GM12878 (cell line): ENCODE measurements at regions of chr1 and their contacts with region 1.

Region 1: GRCh38 chr1:92994105-92994712 is 32.9 kb upstream of the DIPK1A start:
- DNase-seq: no peak
- ATAC-seq: peak; percentile 98
- H3K4me3 ChIP-seq: no peak overlapping the region
- H3K27ac ChIP-seq: no peak overlapping the region
- H3K4me1 ChIP-seq: no peaks in the 10 kb centered on the region
- H3K27me3 ChIP-seq: no peaks in the 10 kb centered on the region
- CTCF ChIP-seq: peak; percentile 65 to 81 (median 73)
- EP300 ChIP-seq: no peak
- POLR2A ChIP-seq: no peak
- RAD21 ChIP-seq: peak; percentile 100

Region 2: GRCh38 chr1:92858564-92859399 is 135.4 kb before region 1 on chr1:
- CTCF ChIA-PET with region 1: interaction called, 165 read pairs
- POLR2A ChIA-PET with region 1: interaction called, 8 read pairs
- RAD21 ChIA-PET with region 1: interaction called, 67 read pairs
- SMC1A ChIA-PET with region 1: interaction called, 120 read pairs
- in situ Hi-C with region 1: loop called (anchors 5 kb)
- intact Hi-C with region 1: loop called (anchors 1 kb)
- DNase-seq: peak; percentile 59
- ATAC-seq: peak; percentile 90
- H3K4me3 ChIP-seq: no peak overlapping the region
- H3K27ac ChIP-seq: no peak overlapping the region
- H3K4me1 ChIP-seq: peaks cover 9% of the 10 kb centered on the region
- H3K27me3 ChIP-seq: no peaks in the 10 kb centered on the region
- CTCF ChIP-seq: peak; percentile 78 to 99 (median 96)
- EP300 ChIP-seq: no peak
- POLR2A ChIP-seq: no peak
- RAD21 ChIP-seq: peak; percentile 100

Region 3: GRCh38 chr1:92886886-92887419 is 107.3 kb before region 1 on chr1:
- CTCF ChIA-PET with region 1: interaction called, 12 read pairs
- POLR2A ChIA-PET with region 1: no interaction called
- RAD21 ChIA-PET with region 1: no interaction called
- SMC1A ChIA-PET with region 1: no interaction called
- in situ Hi-C with region 1: no loop called
- intact Hi-C with region 1: no loop called
- DNase-seq: no peak
- ATAC-seq: no peak
- H3K4me3 ChIP-seq: no peak overlapping the region
- H3K27ac ChIP-seq: no peak overlapping the region
- H3K4me1 ChIP-seq: no peaks in the 10 kb centered on the region
- H3K27me3 ChIP-seq: no peaks in the 10 kb centered on the region
- CTCF ChIP-seq: no peak
- EP300 ChIP-seq: no peak
- POLR2A ChIP-seq: no peak
- RAD21 ChIP-seq: no peak

Region 4: DNA sequence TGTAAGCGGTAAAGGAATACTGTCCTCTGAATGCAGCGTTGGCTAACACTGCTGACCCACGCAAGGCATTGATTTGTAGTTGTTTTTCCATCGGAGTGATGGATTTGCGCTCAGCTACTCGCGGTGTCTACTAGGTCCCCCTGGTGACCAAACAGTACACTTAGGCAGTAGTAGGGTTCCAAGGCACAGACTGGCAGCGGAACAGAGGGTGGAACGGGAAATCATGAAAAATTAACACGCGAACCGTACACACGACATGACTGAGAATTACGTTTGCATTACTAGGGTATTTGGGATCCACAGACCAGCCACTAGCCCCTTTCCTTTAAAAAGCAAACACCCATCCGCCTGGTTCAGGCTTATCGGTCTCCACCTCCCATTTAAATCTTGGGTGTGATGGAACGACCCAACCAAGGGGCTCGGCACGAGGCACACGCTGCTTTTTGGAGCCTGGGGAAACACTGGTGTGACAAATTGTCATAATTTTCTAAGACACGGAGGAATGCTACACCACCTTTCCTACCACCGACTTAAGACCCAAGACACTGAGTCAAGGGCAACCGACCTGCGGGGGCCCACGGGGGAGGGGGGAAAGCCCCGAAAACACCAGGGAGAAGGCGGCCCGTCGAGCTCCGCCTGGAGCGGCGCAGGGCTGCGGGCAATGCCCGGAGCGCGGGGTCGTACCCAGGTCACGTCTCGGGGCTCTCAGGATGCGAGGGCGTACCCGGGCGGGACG is 33.6 kb before region 1 on chr1:
- CTCF ChIA-PET with region 1: interaction called, 136 read pairs
- POLR2A ChIA-PET with region 1: interaction called, 28 read pairs
- RAD21 ChIA-PET with region 1: interaction called, 133 read pairs
- SMC1A ChIA-PET with region 1: interaction called, 141 read pairs
- in situ Hi-C with region 1: no loop called
- intact Hi-C with region 1: loop called (anchors 1 kb)
- DNase-seq: peak; percentile 72
- ATAC-seq: peak; percentile 66
- H3K4me3 ChIP-seq: peak overlapping the region; percentile 97
- H3K27ac ChIP-seq: peak overlapping the region; percentile 91
- H3K4me1 ChIP-seq: peaks cover 40% of the 10 kb centered on the region
- H3K27me3 ChIP-seq: no peaks in the 10 kb centered on the region
- CTCF ChIP-seq: peak; percentile 65 to 91 (median 79)
- EP300 ChIP-seq: no peak
- POLR2A ChIP-seq: no peak
- RAD21 ChIP-seq: peak; percentile 94

Region 5: DNA sequence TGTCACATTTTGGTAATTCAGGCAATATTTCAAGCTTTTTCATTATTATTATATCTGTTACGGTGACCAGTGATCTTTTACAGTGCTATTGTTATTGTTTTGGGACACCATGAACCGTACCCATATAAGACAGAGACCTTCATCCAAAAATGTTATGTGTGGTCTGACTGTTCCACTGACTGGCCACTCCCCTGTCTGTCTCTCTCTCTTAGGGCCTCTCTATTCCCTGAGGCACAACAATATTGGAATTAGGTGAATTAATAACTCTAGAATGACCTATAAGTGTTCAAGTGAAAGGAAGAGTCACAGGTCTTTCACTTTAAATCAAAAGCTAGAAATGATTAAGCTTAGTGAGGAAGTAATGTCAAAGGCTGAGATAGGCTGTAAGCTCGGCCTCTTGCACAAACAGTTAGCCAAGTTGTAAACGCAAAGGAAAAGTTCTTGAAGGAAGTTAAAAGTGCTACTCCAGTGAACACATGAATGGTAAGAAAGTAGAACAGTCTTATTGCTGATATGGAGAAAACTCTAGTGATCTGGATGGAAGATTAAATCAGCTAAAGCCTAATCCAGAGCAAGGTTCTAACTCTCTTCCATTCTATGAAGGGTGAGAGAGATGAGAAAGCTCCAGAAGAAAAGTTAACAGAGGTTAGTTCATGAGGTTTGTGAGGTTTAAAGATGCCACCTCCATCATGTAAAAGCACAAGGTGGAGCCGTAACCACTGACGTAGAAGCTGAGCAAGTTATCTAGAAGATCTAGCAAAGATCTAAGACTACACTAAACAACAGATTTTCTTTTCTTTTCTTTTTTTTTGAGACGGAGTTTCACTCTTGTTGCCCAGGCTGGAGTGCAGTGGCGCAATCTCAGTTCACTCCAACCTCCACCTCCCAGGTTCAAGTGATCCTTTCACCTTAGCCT is 13.2 kb before region 1 on chr1:
- CTCF ChIA-PET with region 1: interaction called, 64 read pairs
- POLR2A ChIA-PET with region 1: interaction called, 13 read pairs
- RAD21 ChIA-PET with region 1: interaction called, 27 read pairs
- SMC1A ChIA-PET with region 1: interaction called, 253 read pairs
- in situ Hi-C with region 1: no loop called
- intact Hi-C with region 1: no loop called
- DNase-seq: no peak
- ATAC-seq: peak; percentile 57
- H3K4me3 ChIP-seq: peak overlapping the region; percentile 33; the same call in 1 of the 2 replicates
- H3K27ac ChIP-seq: peak overlapping the region; percentile 75
- H3K4me1 ChIP-seq: peaks cover 20% of the 10 kb centered on the region
- H3K27me3 ChIP-seq: no peaks in the 10 kb centered on the region
- CTCF ChIP-seq: no peak
- EP300 ChIP-seq: no peak
- POLR2A ChIP-seq: no peak
- RAD21 ChIP-seq: no peak

Region 6: DNA sequence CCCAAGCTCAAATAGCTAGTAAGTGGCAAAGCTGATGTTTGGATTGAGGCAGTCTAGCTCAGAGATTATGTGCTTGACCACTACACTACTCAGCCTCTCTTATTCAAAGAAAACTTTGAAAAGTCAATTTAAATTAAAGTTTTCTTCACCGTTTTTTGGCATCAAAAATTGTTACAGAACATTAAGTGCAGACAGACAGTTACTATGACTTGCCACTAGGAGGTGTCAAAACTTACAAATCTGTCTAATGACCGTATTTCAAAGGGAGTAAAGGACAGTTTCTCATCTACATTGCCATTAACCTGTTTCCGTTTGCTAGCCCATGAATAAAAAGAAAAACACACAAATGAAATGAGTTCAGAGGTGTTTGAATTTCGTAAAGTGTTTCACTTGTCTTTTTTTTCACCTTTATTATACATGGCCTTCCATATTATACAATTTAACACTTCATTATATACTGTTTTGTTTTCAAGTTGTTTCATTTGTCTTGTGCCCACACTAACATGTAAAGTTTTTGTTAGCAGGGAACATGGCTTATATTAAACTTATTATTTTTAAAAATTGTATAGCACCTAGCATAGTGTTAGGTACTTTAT is 27.4 kb after region 1 on chr1:
- CTCF ChIA-PET with region 1: interaction called, 25 read pairs
- POLR2A ChIA-PET with region 1: no interaction called
- RAD21 ChIA-PET with region 1: interaction called, 3 read pairs
- SMC1A ChIA-PET with region 1: interaction called, 11 read pairs
- in situ Hi-C with region 1: no loop called
- intact Hi-C with region 1: no loop called
- DNase-seq: no peak
- ATAC-seq: peak; percentile 94
- H3K4me3 ChIP-seq: no peak overlapping the region
- H3K27ac ChIP-seq: no peak overlapping the region
- H3K4me1 ChIP-seq: no peaks in the 10 kb centered on the region; the same call in 1 of the 2 replicates
- H3K27me3 ChIP-seq: no peaks in the 10 kb centered on the region; a peak in 1 of 4 replicates
- CTCF ChIP-seq: peak; percentile 70 to 78 (median 71)
- EP300 ChIP-seq: no peak
- POLR2A ChIP-seq: no peak
- RAD21 ChIP-seq: peak; percentile 93

Region 7: DNA sequence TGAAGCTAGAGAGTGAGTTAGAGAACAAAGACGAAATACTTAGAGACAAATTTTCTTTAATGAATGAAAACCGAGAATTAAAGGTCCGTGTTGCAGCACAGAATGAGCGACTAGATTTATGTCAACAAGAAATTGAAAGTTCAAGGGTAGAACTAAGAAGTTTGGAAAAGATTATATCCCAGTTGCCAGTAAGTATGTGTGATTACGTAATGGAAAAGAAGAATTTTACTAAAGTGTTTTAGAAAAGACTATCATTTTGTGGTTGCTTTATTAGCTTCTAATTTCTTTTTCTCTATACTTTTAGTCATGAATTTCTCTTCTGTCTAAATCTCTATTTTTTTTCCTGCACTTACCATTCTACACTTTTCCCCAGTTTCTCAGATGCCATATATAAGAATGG is 213.0 kb after region 1 on chr1:
- CTCF ChIA-PET with region 1: no interaction called
- POLR2A ChIA-PET with region 1: no interaction called
- RAD21 ChIA-PET with region 1: no interaction called
- SMC1A ChIA-PET with region 1: no interaction called
- in situ Hi-C with region 1: no loop called
- intact Hi-C with region 1: no loop called
- DNase-seq: no peak
- ATAC-seq: no peak
- H3K4me3 ChIP-seq: no peak overlapping the region
- H3K27ac ChIP-seq: no peak overlapping the region
- H3K4me1 ChIP-seq: no peaks in the 10 kb centered on the region
- H3K27me3 ChIP-seq: no peaks in the 10 kb centered on the region
- CTCF ChIP-seq: no peak
- EP300 ChIP-seq: no peak
- POLR2A ChIP-seq: no peak
- RAD21 ChIP-seq: no peak

Region 8: DNA sequence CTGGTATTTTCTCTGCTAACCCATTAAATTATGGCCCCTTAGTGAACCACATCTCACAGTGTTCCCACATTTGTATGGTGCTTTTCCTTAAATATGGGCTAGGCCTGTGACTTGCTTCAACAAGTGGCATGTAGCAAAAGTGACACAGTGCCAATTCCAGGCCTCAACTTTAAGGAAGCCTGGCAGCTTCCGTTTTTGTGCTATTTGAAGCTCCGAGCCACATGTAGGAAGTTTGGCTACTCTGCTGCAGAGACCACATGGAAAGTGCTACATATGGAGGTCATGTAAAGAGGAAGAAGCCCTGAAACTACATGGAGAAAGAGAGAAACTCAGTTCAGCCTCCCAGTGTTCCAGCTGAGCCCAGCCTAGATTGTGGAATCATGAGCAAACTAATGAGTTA is 323.0 kb after region 1 on chr1:
- CTCF ChIA-PET with region 1: no interaction called
- POLR2A ChIA-PET with region 1: no interaction called
- RAD21 ChIA-PET with region 1: no interaction called
- SMC1A ChIA-PET with region 1: no interaction called
- in situ Hi-C with region 1: no loop called
- intact Hi-C with region 1: no loop called
- DNase-seq: no peak
- ATAC-seq: no peak
- H3K4me3 ChIP-seq: no peak overlapping the region
- H3K27ac ChIP-seq: no peak overlapping the region
- H3K4me1 ChIP-seq: no peaks in the 10 kb centered on the region
- H3K27me3 ChIP-seq: no peaks in the 10 kb centered on the region
- CTCF ChIP-seq: no peak
- EP300 ChIP-seq: no peak
- POLR2A ChIP-seq: no peak
- RAD21 ChIP-seq: no peak